Dendritic cell treated with granulocyte-macrophage colony-stimulating factor and Interleukin-4, amounts not matched to agents 40 ng/mL and 50 ng/mL, for 4 days (primary cell): ENCODE measurements at regions of chr1 and their contacts with region 1.

Region 1: DNA sequence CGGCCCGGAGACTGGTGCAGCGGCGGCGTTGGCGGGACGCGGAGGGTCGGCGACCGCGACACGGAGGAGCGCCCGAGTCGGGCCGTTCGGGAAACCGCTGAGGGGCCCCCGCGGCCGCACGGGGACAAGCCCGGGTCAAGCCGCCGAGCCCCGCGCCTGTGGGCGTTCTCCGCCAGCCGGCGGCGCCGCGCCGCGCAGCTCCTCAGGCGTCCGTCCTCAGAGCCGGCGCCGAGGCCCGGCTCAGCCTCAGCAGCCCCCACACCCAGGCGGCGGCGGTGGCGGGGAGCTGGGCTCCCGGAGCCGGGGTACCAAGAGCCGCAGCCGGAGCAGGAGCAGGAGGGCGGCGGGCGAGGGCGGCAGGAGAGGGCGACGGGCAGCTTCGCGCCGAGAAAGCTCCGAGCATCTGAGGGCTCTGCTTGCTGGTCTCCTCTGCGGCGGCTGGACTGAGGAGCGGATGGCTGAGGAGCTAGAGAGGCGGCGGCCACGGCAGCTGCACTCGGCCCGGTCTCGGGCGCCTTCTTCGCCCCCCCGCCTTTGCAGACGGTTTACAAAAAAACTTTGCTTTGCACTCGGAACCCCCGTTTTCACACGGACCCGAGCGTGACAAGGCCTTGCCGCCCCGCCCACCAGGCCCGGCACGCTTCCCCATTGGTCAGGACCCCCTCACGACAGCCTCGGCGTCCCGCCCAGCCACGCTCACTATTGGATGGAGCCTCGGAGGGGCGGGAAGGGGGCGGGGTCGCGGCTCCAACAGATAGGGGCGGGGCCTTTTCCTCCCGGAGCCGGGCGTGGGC is at the start of gene SLC30A1:
- H3K4me3 Mint-ChIP-seq: peak within 1 kb of the TSS; percentile 94
- H3K27ac Mint-ChIP-seq: peak within 1 kb of the TSS; percentile 89
- H3K4me1 Mint-ChIP-seq: peaks cover 42% of the 10 kb centered on the region
- H3K27me3 Mint-ChIP-seq: no peaks in the 10 kb centered on the region

Region 2: GRCh38 chr1:211514030-211514754 is 64.6 kb before region 1 on chr1:
- intact Hi-C with region 1: loop called (anchors 5 kb)
- H3K4me3 Mint-ChIP-seq: no peak overlapping the region
- H3K27ac Mint-ChIP-seq: no peak overlapping the region
- H3K4me1 Mint-ChIP-seq: peaks cover 45% of the 10 kb centered on the region
- H3K27me3 Mint-ChIP-seq: peaks cover 28% of the 10 kb centered on the region

Region 3: GRCh38 chr1:211527006-211527405 is 51.8 kb before region 1 on chr1:
- intact Hi-C with region 1: no loop called
- H3K4me3 Mint-ChIP-seq: no peak overlapping the region
- H3K27ac Mint-ChIP-seq: no peak overlapping the region
- H3K4me1 Mint-ChIP-seq: peaks cover 30% of the 10 kb centered on the region
- H3K27me3 Mint-ChIP-seq: no peaks in the 10 kb centered on the region

Region 4: GRCh38 chr1:211606914-211607755 is 28.3 kb after region 1 on chr1:
- intact Hi-C with region 1: loop called (anchors 2 kb)
- H3K4me3 Mint-ChIP-seq: peak overlapping the region; percentile 84
- H3K27ac Mint-ChIP-seq: peak overlapping the region; percentile 97
- H3K4me1 Mint-ChIP-seq: peaks cover 75% of the 10 kb centered on the region
- H3K27me3 Mint-ChIP-seq: no peaks in the 10 kb centered on the region

Region 5: GRCh38 chr1:211625040-211625439 is 46.2 kb after region 1 on chr1:
- intact Hi-C with region 1: loop called (anchors 1 kb)
- H3K4me3 Mint-ChIP-seq: no peak overlapping the region
- H3K27ac Mint-ChIP-seq: no peak overlapping the region
- H3K4me1 Mint-ChIP-seq: peaks cover 7% of the 10 kb centered on the region
- H3K27me3 Mint-ChIP-seq: peaks cover 4% of the 10 kb centered on the region